Ascending aorta (tissue), 2 donors: ENCODE measurements at regions of chr7 and their contacts with region 1.

Region 1: DNA sequence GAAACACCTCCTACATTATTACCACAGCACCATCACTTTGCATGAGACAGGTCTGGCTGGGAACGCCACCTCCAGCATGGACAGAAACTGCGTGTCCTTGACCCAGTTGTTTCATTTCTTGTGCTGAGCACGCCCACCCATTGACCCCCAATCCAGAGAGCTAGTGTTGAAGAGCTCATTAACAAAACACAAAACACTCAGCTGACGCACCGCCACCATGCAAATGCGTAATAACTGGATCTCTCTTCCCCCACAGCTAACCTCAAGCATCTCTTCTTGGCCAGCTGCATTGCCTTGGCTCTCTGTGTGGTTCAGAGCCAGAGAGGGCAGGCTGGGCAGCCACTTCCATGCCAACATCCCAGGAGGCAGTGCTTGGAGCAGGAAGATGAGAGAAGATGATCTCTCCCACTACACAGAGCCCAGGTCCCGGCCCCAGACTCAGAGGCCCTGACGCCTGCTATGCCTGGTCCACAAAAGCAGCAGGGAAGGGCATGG is 173.5 kb downstream of the PLXNA4 start:
- DNase-seq: peak in 1 of 2 donors; percentile 85
- H3K4me3 ChIP-seq: peak overlapping the region in 1 of 2 donors; percentile 35
- H3K27ac ChIP-seq: peak overlapping the region; percentile 78 to 79
- H3K4me1 ChIP-seq: peaks cover 15 to 46% of the 10 kb centered on the region in 2 donors
- H3K27me3 ChIP-seq: no peaks in the 10 kb centered on the region
- CTCF ChIP-seq: no peak

Region 2: GRCh38 chr7:132472463-132473120 is 69.8 kb after region 1 on chr7:
- intact Hi-C with region 1: loop called (anchors 5 kb)
- DNase-seq: peak; percentile 28 to 86
- H3K4me3 ChIP-seq: no peak overlapping the region
- H3K27ac ChIP-seq: peak overlapping the region; percentile 67 to 81
- H3K4me1 ChIP-seq: peaks cover 0 to 24% of the 10 kb centered on the region in 2 donors
- H3K27me3 ChIP-seq: no peaks in the 10 kb centered on the region
- CTCF ChIP-seq: no peak

Region 3: GRCh38 chr7:132899833-132900232 is 497.0 kb after region 1 on chr7:
- intact Hi-C with region 1: no loop called
- DNase-seq: no peak
- H3K4me3 ChIP-seq: no peak overlapping the region
- H3K27ac ChIP-seq: no peak overlapping the region
- H3K4me1 ChIP-seq: no peaks in the 10 kb centered on the region
- H3K27me3 ChIP-seq: no peaks in the 10 kb centered on the region
- CTCF ChIP-seq: no peak